ENCODE measurements at regions of chr1 and their contacts with region 1.

Region 1: DNA sequence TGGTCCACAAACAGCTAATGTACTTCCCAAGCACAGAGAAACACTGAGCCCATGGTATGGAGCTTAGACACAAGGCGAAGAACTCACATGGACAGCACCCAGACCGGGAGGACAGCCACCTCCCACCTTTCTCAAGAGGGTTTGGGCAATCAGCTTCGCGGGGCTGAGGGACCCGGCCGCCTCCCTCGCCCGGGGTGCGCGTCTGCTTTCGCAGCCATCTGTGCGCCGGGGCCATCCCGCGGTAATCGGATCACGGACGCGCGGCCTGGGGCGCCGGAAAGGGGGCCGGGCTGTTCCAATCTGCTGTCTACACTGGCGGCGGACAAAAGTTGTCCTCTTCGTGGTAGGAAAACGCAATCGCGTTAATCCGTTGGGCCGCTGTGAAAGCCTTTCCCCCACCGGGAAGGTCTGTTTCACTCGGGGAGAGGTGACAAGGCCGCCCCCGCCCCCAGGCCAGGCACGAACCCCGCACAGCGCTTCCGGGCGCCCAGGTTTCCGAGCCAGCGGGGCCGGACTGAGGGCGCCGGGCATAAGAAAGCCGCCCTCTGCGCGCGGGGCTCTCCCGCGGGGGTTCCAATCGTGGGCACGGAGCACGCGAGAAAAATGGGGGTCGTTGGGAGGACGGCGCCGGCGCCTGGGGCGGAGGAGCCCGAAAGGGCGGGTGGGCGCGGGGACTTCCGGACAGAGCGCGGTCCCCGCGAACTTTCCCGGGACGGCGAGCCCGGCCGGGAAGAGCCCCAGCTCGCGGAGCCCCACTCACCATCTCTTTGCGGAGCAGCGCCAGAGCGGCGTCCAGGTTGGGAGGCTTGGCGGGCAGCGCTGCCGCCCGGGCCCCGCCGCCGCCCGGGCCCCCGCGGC is 664 bp downstream of the FAM89A start:
- DNase-seq: no peak
- H3K4me3 ChIP-seq: peak overlapping the region; percentile 74
- CTCF ChIP-seq: no peak

Region 2: DNA sequence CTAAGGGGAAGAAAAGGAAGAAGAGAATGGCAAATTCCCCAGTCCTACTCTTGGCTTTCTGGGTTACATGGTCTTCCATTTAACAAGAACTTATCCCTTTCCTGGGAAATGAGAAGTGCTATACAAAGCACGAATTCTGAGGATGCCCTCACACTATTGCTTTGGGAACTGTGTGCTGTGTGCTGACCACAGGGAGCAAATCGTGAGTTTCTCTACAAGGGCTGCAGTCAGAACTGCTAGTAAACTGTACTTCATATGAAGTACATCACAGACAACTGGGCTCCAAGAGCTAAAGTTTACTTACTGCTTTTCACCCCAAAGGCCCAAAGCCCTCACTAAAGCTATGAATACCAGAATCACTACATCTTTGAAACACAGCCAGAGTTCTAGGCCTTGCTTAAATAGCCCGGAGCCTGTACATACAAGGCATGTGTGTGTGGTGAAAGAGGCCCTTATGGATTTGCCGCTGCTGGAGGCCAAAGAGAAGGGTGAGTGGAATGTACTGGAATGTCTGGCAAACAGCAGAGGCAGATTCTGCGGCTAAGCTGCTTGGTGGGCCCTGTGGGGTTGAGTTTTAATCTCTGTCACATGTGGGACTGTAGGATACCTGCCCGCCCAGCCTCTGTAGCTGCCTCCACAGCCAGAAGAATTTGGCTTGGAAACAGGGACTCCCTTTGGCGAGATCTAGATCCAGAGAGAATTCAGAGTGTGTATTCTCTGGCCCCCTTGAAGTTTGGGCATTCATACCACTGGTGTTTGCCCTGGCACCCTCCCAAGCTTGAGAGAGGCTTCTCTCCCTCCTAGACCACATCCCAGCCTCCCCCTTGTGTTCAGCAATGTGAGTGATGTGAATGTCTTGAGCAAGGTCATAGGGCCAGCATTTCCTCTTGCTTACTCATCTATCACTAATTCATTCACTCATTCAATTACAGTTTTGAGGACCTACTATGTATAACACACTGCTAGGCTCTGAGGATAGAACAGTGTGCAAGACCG is 100.6 kb after region 1 on chr1:
- in situ Hi-C with region 1: loop called (anchors 5 kb)
- DNase-seq: peak; percentile 97
- H3K4me3 ChIP-seq: no peak overlapping the region
- CTCF ChIP-seq: no peak

Region 3: DNA sequence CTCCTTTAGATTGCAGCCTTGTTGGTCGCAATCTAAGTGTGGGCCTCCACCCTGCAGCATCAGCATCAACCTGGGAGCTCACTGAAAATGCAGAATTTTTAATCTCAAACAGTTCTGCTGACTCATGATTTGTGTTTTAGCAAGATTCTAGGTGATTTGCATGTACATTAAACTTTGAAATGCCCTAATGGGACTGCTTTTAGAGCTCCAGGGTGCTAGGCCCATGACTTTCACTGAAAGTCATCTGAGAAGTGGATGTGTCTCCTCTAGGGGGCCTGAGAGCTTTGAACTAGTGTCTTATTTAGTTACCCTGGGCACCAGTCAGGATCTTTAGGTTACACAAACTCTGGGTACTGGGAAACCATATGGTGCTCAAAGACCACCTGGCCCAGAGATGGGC is 131.5 kb after region 1 on chr1:
- in situ Hi-C with region 1: no loop called
- DNase-seq: no peak
- H3K4me3 ChIP-seq: no peak overlapping the region
- CTCF ChIP-seq: peak; percentile 6

Measured in astrocyte of the cerebellum (primary cell).